GM10248 (cell line): ENCODE measurements at regions of chr22 and their contacts with region 1.

Region 1: DNA sequence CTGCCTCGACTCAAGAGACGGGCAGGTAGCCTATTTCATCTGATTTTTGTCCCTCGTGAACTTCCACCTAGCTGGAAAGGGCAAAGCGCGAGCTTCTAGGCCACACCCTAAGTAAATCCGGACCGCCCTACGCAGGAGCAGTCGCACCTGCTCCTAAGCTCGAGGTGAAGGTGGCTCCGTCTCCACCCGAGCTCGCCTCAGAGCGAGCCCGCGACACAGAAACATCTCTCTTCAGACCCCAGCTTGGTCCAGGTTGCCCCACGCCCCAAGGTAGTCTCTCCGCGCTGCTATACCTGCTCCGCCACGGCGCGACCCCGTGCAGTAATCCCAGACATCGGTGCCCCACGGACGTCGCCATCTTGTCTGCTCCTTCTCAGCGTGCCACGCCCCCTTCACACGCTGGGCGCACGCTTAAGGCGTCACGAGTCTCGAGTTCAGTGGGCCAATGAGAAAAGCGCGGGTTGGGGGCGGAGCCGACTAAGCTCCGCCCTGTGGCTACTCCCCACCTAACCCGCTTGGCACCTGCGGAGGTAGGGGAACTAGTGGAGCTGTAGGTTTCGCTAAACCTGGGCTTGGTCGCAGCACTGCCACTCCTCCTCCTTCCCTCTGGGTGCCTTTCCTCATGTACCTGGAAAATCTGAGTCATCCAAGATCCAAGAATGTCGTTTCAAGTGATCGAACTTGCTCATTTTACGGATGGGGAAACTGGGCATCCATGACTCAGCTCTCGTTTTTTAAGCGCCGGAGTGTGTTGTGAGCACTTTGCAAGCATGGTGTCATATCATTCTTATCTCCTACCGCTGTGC is at the start of gene PISD:
- DNase-seq: peak; percentile 97
- CTCF ChIP-seq: no peak

Region 2: GRCh38 chr22:31465307-31465706 is 196.7 kb before region 1 on chr22:
- CTCF ChIA-PET with region 1: no interaction called
- POLR2A ChIA-PET with region 1: no interaction called
- DNase-seq: no peak
- CTCF ChIP-seq: no peak

Region 3: DNA sequence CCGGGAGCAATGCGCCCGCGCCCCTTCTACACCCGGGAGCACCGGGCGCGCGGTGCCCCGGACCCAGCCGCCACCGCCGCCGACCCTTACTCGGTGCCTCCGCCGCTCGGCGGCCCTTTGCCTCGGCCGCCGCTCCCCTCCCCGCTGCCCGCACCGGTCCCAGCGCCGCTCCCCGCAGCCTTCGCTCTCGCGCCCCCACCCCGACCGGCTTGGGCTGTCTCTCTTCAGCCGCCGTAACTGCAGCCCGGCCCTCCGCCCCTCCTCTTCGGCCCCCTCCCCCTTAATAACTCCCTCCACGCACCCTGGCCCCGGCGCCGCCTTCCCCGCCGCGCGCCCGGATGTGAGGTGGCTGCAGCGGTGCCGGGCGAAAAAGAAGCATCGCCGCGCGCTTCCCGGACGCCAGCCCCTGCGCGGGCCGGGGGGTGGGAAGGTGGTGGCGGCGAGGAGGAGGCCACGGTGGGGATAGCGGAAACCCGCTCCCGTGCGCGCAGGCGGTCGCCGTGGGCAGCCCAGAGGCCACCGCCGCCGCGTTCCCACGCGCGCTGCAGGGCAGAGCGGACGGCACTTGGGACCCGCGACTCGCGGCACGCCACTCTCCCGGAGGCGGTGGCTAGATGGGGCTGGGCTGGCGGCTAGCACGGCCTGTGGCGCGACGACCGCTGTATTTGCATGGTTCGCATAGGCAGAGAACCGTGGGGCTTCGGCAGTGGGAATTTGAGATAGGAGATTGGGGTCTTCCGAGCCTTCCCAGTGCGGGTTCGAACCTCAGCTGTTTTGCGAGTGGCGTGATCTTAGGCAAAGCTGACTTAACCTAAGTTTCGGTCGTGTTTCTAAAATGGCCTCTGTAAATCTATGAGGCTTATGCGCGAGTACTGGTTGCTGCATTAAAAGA is 172.2 kb before region 1 on chr22 and contains the start of gene EIF4ENIF1:
- CTCF ChIA-PET with region 1: no interaction called
- POLR2A ChIA-PET with region 1: no interaction called
- DNase-seq: peak; percentile 90
- CTCF ChIP-seq: no peak

Region 4: DNA sequence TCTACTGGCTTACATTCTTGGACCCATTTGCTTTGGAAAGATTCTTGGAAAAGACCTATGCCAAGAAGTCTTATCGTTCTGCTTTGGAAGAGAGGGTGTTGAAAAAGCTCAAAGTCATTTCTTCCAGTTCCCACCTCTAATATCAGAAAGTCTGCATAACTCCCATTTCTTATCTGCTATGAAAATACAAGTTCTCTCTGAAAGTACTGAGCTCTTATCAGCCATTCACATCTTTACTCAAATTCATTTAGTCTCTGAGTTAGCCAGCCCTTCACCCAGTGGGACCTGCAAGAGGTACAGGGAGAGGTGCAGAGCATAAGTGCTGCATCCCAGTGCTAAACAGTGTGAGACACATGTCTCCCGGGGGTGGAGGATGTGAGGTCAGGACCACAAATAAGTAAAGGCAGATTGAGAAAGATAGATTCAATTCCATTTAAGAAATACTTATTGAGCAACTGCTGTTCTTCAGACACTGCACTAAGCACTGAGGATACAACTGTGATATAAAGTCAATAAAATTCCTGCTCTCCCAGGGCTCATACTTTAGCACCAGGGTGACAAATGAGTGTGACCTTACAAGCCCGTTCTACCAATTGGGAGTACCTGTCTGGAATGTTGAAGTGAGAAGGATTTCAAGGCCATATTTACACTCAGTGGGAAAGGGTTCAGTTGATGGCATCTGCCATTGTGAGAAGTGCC is 76.7 kb before region 1 on chr22:
- CTCF ChIA-PET with region 1: no interaction called
- POLR2A ChIA-PET with region 1: no interaction called
- DNase-seq: no peak
- CTCF ChIP-seq: no peak

Region 5: GRCh38 chr22:31676700-31677099 is 14.6 kb after region 1 on chr22:
- CTCF ChIA-PET with region 1: interaction called, 40 read pairs
- POLR2A ChIA-PET with region 1: interaction called, 4 read pairs
- DNase-seq: peak; percentile 91
- CTCF ChIP-seq: no peak

Region 6: DNA sequence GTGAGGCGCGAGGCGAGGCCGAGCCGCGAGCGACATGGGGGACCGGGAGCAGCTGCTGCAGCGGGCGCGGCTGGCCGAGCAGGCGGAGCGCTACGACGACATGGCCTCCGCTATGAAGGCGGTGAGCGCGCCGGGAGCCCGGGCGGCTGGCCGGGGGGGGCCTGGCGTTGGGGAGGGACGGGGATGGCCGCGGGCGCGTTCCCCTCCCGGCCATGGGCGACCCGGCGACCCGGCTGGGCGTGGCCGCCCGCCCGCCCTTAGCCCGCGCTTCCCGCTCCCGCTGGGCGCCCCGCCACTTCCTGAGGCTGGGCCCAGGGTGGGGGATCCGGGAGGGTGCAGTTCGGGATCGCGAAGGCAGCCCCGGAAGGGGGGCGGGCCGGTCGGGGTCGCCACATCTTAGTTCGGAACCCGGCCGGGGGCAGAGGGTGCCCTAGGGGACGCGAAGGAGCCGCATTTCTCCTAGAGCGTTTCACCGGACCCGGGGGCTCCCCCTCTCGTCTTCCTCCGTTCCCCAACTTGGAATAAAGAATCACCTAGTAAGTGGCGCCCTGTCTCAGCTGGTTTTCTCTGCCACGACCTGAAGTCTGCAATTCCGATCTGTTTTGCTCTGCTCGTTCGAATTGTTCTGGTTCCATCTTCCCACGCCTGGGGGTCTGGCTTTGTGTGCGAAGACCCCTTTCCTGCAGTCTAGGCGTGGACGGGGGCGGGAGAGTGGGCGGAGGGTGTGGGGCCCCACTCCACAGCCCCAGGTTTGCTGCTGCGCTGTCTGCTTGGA is 282.8 kb after region 1 on chr22:
- CTCF ChIA-PET with region 1: interaction called, 31 read pairs
- POLR2A ChIA-PET with region 1: no interaction called
- DNase-seq: no peak
- CTCF ChIP-seq: no peak

Region 7: GRCh38 chr22:31952459-31952858 is 290.4 kb after region 1 on chr22:
- CTCF ChIA-PET with region 1: interaction called, 31 read pairs
- POLR2A ChIA-PET with region 1: no interaction called
- DNase-seq: no peak
- CTCF ChIP-seq: no peak

Region 8: GRCh38 chr22:31970490-31971444 is 308.7 kb after region 1 on chr22:
- CTCF ChIA-PET with region 1: interaction called, 23 read pairs
- POLR2A ChIA-PET with region 1: no interaction called
- DNase-seq: peak; percentile 93
- CTCF ChIP-seq: peak; percentile 94